ENCODE measurements at regions of chr10 and their contacts with region 1.

Region 1: GRCh38 chr10:61189912-61190311 is 245.9 kb upstream of the RHOBTB1 start:
- DNase-seq: no peak
- H3K4me3 ChIP-seq: no peak overlapping the region
- H3K4me3 Mint-ChIP-seq: no peak overlapping the region
- H3K27ac Mint-ChIP-seq: no peak overlapping the region
- H3K4me1 ChIP-seq: no peaks in the 10 kb centered on the region
- H3K4me1 Mint-ChIP-seq: peaks cover 7% of the 10 kb centered on the region
- H3K27me3 ChIP-seq: no peaks in the 10 kb centered on the region
- H3K27me3 Mint-ChIP-seq: no peaks in the 10 kb centered on the region
- CTCF ChIP-seq: no peak

Region 2: GRCh38 chr10:61024856-61025600 is 164.9 kb before region 1 on chr10:
- CTCF ChIA-PET with region 1: no interaction called
- POLR2A ChIA-PET with region 1: no interaction called
- intact Hi-C with region 1: loop called (anchors 1 kb)
- DNase-seq: peak in 1 of 2 experiments; percentile 52
- H3K4me3 ChIP-seq: no peak overlapping the region
- H3K4me3 Mint-ChIP-seq: no peak overlapping the region
- H3K27ac Mint-ChIP-seq: no peak overlapping the region
- H3K4me1 ChIP-seq: no peaks in the 10 kb centered on the region
- H3K4me1 Mint-ChIP-seq: no peaks in the 10 kb centered on the region
- H3K27me3 ChIP-seq: no peaks in the 10 kb centered on the region
- H3K27me3 Mint-ChIP-seq: peaks cover 3% of the 10 kb centered on the region
- CTCF ChIP-seq: peak; percentile 91 to 97